Gastrocnemius medialis (tissue), 4 donors: ENCODE measurements at regions of chrX and their contacts with region 1.

Region 1: DNA sequence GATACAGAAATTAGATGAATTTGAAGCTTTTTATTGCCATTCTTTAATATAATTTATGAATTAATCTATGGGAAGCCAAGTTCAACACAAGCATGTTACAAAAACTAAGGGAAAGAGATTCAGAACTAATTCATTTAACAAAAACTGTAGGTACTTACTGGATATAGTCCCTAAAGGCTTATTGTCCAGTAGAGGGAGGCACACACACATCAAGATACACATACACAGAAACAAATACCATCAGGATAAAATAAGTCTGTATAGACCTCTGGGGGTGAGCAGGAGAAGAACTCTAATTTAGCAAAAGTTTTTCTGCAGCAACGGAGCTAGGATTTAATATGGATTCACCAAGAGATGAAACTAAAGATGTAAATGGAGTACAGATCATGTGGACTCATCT is 83.0 kb upstream of the IL13RA1 start:
- DNase-seq: no peak
- ATAC-seq: peak in 1 of 2 donors; percentile 69
- H3K4me3 ChIP-seq: no peak overlapping the region
- H3K27ac ChIP-seq: no peak overlapping the region
- H3K4me1 ChIP-seq: no peaks in the 10 kb centered on the region
- H3K27me3 ChIP-seq: no peaks in the 10 kb centered on the region
- CTCF ChIP-seq: peak in 4 of 5 experiments; percentile 18 to 46 (median 34)
- POLR2A ChIP-seq: no peak

Region 2: GRCh38 chrX:118603981-118604380 is 40.4 kb before region 1 on chrX:
- in situ Hi-C with region 1: no loop called
- intact Hi-C with region 1: loop called (anchors 5 kb)
- DNase-seq: peak; percentile 3 to 36
- ATAC-seq: peak; percentile 75 to 95
- H3K4me3 ChIP-seq: peak overlapping the region in 1 of 4 donors; percentile 34
- H3K27ac ChIP-seq: no peak overlapping the region
- H3K4me1 ChIP-seq: no peaks in the 10 kb centered on the region
- H3K27me3 ChIP-seq: no peaks in the 10 kb centered on the region
- CTCF ChIP-seq: peak; percentile 45 to 77 (median 66)
- POLR2A ChIP-seq: no peak

Region 3: GRCh38 chrX:118702741-118703140 is 58.4 kb after region 1 on chrX:
- in situ Hi-C with region 1: no loop called
- intact Hi-C with region 1: loop called (anchors 10 kb)
- DNase-seq: no peak
- ATAC-seq: no peak
- H3K4me3 ChIP-seq: no peak overlapping the region
- H3K27ac ChIP-seq: no peak overlapping the region
- H3K4me1 ChIP-seq: no peaks in the 10 kb centered on the region
- H3K27me3 ChIP-seq: no peaks in the 10 kb centered on the region
- CTCF ChIP-seq: no peak
- POLR2A ChIP-seq: no peak

Region 4: DNA sequence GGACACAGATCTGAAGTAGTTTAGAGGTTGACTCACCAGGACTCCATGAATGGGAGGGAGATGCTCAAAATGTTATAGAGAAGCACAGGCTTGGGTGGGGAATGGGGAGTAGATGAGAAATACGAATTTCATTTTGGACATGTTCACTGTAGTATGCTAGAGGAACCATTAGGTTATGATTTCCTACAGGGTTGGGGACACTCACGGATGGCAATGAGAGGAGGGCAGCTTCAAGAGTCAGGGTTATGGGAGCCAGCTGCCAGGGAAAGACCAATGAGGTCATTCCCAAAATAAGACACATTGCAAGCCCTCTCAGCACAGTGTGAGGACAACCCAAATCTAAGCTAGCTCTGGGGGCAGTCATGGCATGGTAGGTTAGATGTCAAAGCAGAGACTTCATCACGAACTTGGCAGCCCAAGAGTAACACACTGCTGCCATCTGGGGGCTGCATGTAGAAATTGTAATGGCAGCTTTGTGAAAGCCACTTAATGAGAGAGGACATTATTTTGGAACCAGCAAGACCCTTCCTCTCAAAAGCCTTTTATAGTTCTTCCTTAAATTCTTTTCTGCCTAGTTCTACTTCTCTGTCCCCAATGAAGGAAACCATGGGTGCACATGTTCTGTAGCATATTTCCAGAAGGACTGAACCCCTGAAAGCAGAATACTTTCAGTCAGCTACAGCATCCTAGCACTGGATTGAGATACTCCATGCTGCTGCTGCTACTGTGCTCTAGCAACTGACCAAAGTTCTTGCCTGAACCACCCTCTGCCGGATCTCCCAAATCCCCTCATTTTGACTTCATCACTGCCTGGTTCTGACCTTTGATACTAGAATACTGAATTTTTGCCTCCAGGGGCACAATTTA is 163.0 kb after region 1 on chrX:
- in situ Hi-C with region 1: loop called (anchors 5 to 10 kb)
- intact Hi-C with region 1: loop called (anchors 1 kb)
- DNase-seq: peak; percentile 4 to 29
- ATAC-seq: peak in 1 of 2 donors; percentile 53
- H3K4me3 ChIP-seq: no peak overlapping the region
- H3K27ac ChIP-seq: no peak overlapping the region
- H3K4me1 ChIP-seq: no peaks in the 10 kb centered on the region
- H3K27me3 ChIP-seq: no peaks in the 10 kb centered on the region
- CTCF ChIP-seq: peak; percentile 53 to 67 (median 66)
- POLR2A ChIP-seq: no peak

Region 5: GRCh38 chrX:119067023-119067739 is 422.8 kb after region 1 on chrX:
- in situ Hi-C with region 1: loop called in 1 of 4 experiments (anchors 25 kb)
- intact Hi-C with region 1: no loop called
- DNase-seq: peak in 1 of 2 donors; percentile 22
- ATAC-seq: peak in 1 of 2 donors; percentile 58
- H3K4me3 ChIP-seq: no peak overlapping the region
- H3K27ac ChIP-seq: no peak overlapping the region
- H3K4me1 ChIP-seq: no peaks in the 10 kb centered on the region
- H3K27me3 ChIP-seq: no peaks in the 10 kb centered on the region
- CTCF ChIP-seq: peak; percentile 39 to 67 (median 57)
- POLR2A ChIP-seq: no peak